GM12878 (cell line): ENCODE measurements at regions of chr5 and their contacts with region 1.

Region 1: GRCh38 chr5:81288021-81288433 is 13.4 kb upstream of the ZCCHC9 start:
- DNase-seq: no peak
- ATAC-seq: peak; percentile 66
- H3K4me3 ChIP-seq: no peak overlapping the region
- H3K27ac ChIP-seq: peak overlapping the region; percentile 21; the same call in 1 of the 2 replicates
- H3K4me1 ChIP-seq: peaks cover 12% of the 10 kb centered on the region
- H3K27me3 ChIP-seq: no peaks in the 10 kb centered on the region
- CTCF ChIP-seq: no peak
- EP300 ChIP-seq: no peak
- POLR2A ChIP-seq: no peak
- RAD21 ChIP-seq: no peak

Region 2: GRCh38 chr5:81212211-81212751 is 75.7 kb before region 1 on chr5:
- CTCF ChIA-PET with region 1: no interaction called
- POLR2A ChIA-PET with region 1: no interaction called
- RAD21 ChIA-PET with region 1: no interaction called
- SMC1A ChIA-PET with region 1: no interaction called
- in situ Hi-C with region 1: no loop called
- intact Hi-C with region 1: loop called (anchors 5 kb)
- DNase-seq: peak; percentile 51
- ATAC-seq: peak; percentile 85
- H3K4me3 ChIP-seq: no peak overlapping the region
- H3K27ac ChIP-seq: no peak overlapping the region
- H3K4me1 ChIP-seq: peaks cover 18% of the 10 kb centered on the region; the same call in 1 of the 2 replicates
- H3K27me3 ChIP-seq: no peaks in the 10 kb centered on the region
- CTCF ChIP-seq: peak in 1 of 3 experiments; percentile 31; a peak in 2 of 6 replicates
- EP300 ChIP-seq: no peak
- POLR2A ChIP-seq: no peak
- RAD21 ChIP-seq: no peak

Region 3: GRCh38 chr5:81249240-81249639 is 38.8 kb before region 1 on chr5:
- CTCF ChIA-PET with region 1: no interaction called
- POLR2A ChIA-PET with region 1: no interaction called
- RAD21 ChIA-PET with region 1: no interaction called
- SMC1A ChIA-PET with region 1: no interaction called
- in situ Hi-C with region 1: no loop called
- intact Hi-C with region 1: no loop called
- DNase-seq: no peak
- ATAC-seq: no peak
- H3K4me3 ChIP-seq: no peak overlapping the region
- H3K27ac ChIP-seq: no peak overlapping the region
- H3K4me1 ChIP-seq: no peaks in the 10 kb centered on the region
- H3K27me3 ChIP-seq: no peaks in the 10 kb centered on the region
- CTCF ChIP-seq: no peak
- EP300 ChIP-seq: no peak
- POLR2A ChIP-seq: no peak
- RAD21 ChIP-seq: no peak